Activated CD8-positive, alpha-beta T cell treated with anti-CD3 and anti-CD28 coated beads, Interleukin-2, amount 10 ng/mL, durations not matched to agents 7 days and 5 days (primary cell): ENCODE measurements at regions of chr6 and their contacts with region 1.

Region 1: DNA sequence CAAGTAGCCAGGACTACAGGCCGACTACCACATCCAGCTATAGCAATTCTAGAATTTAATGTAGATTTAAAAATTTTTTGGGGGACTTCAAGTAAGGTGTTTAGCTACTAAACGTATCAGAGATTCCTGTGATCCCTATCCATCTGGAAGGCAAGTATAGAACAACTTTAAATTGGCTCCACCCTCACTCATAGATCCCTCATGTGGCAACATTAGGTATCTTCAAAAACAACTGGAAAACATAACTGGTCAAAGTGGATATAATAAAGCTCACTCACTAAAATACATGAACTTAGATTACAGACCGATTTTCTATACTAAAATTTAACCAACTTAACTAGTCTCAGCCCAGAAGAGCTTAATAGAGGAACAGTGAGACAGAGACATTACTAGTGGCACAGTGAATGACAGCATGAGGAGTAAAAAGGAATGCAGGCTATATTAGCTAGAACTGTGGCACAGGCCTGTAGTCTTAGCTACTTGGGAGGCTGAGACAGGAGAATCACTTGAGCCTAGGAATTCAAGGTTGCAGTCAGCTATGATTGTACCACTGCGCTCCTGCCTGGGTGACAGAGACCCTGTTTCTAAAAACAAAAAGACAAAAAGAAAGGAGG is 14.7 kb downstream of the NUP153 start:
- DNase-seq: no peak
- ATAC-seq: no peak
- H3K4me3 Mint-ChIP-seq: no peak overlapping the region
- H3K27ac Mint-ChIP-seq: peak overlapping the region; percentile 24
- H3K4me1 Mint-ChIP-seq: peaks cover 36% of the 10 kb centered on the region
- H3K27me3 Mint-ChIP-seq: no peaks in the 10 kb centered on the region

Region 2: GRCh38 chr6:17673543-17674254 is 18.3 kb before region 1 on chr6:
- CTCF ChIA-PET with region 1: interaction called, 11 read pairs
- POLR2A ChIA-PET with region 1: no interaction called
- DNase-seq: no peak
- ATAC-seq: peak; percentile 76
- H3K4me3 Mint-ChIP-seq: no peak overlapping the region
- H3K27ac Mint-ChIP-seq: peak overlapping the region; percentile 28
- H3K4me1 Mint-ChIP-seq: peaks cover 20% of the 10 kb centered on the region
- H3K27me3 Mint-ChIP-seq: no peaks in the 10 kb centered on the region

Region 3: DNA sequence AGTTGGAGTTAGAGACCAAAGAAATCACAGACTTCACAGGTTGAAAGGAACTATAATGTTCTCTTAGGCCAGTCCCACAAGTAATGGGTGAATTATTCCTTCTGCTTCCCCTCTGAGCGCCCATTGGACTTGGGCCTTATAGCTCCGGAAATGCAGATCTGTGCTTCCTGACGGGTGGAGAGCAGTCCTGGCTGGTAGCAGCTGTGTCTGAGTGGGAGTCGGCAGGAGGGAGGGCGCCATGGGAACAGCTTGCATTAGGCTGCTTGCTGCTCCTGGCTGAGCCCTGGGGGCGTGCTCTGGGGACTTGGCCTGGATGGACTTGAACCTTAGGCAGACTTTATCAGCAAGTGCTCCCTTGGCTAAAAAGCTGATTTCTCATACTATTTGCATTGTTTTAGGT is 33.1 kb after region 1 on chr6:
- CTCF ChIA-PET with region 1: no interaction called
- POLR2A ChIA-PET with region 1: no interaction called
- DNase-seq: no peak
- ATAC-seq: no peak
- H3K4me3 Mint-ChIP-seq: no peak overlapping the region
- H3K27ac Mint-ChIP-seq: no peak overlapping the region
- H3K4me1 Mint-ChIP-seq: no peaks in the 10 kb centered on the region
- H3K27me3 Mint-ChIP-seq: peaks cover 2% of the 10 kb centered on the region